ENCODE measurements at regions of chr16 and their contacts with region 1.

Region 1: GRCh38 chr16:84726079-84726668 is 26.4 kb downstream of the USP10 start:
- DNase-seq: peak; percentile 66
- H3K4me3 ChIP-seq: peak overlapping the region; percentile 0; the same call in 1 of the 2 replicates
- H3K27ac ChIP-seq: peak overlapping the region; percentile 62
- H3K27me3 ChIP-seq: no peaks in the 10 kb centered on the region
- CTCF ChIP-seq: peak; percentile 93

Region 2: DNA sequence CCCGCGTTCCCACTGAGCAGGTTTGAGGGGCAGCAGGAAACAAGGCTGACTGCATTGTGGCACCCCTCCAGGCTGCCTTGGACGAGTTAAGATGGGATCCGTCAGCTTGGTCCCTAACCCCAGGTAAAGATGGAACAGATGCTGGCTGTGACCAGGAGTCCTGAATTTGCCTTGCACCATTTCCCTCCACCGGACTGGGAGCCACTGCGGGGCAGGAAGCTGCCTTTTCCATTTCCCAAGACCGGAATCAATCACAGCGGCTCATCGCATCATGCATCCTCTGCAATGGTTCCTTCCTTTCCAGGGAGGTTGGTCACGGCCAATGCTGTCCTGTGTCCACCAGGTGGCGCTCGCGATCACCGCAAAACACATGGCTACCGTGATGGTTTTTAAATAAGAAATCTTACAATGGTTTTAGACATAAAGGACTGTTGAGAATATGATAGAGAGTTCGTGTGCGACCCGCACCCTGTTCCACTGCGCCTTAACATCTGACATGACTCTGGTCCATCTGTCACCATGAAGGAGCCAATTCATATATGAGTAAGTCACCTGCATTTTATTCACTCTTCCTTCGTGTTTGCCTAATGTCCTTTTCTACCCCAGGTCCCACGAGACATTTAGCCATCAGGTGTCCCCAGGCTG is 214.9 kb before region 1 on chr16:
- CTCF ChIA-PET with region 1: interaction called, 44 read pairs
- POLR2A ChIA-PET with region 1: no interaction called
- DNase-seq: peak; percentile 77
- H3K4me3 ChIP-seq: 0 out of 2 replicates have a peak overlapping the region, but pooled peaks have one; percentile 29
- H3K27ac ChIP-seq: no peak overlapping the region
- H3K27me3 ChIP-seq: no peaks in the 10 kb centered on the region
- CTCF ChIP-seq: peak; percentile 89

Region 3: DNA sequence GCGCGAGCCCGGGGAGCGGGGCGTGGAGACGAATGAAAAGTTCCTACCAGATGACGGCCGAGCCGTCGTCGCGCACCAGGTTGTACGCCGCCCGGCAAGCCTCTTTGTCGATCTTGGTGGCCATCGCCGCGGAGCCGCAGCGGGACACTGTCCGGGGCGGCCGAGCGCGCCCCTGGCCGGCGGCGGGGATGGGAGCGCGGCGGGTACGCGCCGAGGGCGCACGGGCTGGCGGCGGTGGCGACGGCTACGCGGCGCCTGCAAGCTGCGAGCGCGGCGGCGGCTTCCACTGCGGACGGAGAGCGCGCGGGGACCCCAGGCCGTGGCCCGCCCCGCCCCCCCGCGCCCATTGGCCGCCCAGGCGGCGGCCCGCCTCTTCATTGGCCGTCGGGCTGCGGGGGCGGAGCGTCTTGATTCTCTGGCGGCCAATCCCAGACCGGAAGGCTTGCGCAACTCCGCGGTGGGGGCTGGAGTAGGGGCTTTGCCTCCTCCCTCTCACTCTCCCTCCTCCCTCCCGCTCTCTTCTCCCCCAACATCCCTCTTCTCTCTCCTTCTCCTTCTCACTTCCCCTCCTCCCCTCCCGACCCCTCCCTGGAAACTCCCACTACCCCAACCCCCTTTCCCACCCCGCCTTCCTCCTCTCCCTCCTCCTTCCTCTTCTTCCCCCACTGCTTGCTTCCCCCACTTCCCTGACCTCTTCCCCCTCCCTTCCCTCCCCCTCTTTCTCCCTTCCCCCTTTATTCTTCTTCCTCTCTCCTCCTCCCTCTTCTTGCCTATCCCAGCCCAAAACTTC is 108.2 kb before region 1 on chr16 and contains the start of gene COTL1:
- CTCF ChIA-PET with region 1: interaction called, 62 read pairs
- POLR2A ChIA-PET with region 1: no interaction called
- DNase-seq: peak; percentile 97
- H3K4me3 ChIP-seq: peak within 1 kb of the TSS; percentile 87
- H3K27ac ChIP-seq: peak within 1 kb of the TSS; percentile 96
- H3K27me3 ChIP-seq: no peaks in the 10 kb centered on the region
- CTCF ChIP-seq: no peak
- polyA plus RNA-seq, gene COTL1: 153 and 197 TPM in 2 replicates

Region 4: GRCh38 chr16:84672276-84673202 is 53.6 kb before region 1 on chr16:
- CTCF ChIA-PET with region 1: interaction called, 72 read pairs
- POLR2A ChIA-PET with region 1: interaction called, 3 read pairs
- DNase-seq: peak; percentile 29
- H3K4me3 ChIP-seq: no peak overlapping the region
- H3K27ac ChIP-seq: no peak overlapping the region
- H3K27me3 ChIP-seq: no peaks in the 10 kb centered on the region
- CTCF ChIP-seq: peak; percentile 89

Region 5: DNA sequence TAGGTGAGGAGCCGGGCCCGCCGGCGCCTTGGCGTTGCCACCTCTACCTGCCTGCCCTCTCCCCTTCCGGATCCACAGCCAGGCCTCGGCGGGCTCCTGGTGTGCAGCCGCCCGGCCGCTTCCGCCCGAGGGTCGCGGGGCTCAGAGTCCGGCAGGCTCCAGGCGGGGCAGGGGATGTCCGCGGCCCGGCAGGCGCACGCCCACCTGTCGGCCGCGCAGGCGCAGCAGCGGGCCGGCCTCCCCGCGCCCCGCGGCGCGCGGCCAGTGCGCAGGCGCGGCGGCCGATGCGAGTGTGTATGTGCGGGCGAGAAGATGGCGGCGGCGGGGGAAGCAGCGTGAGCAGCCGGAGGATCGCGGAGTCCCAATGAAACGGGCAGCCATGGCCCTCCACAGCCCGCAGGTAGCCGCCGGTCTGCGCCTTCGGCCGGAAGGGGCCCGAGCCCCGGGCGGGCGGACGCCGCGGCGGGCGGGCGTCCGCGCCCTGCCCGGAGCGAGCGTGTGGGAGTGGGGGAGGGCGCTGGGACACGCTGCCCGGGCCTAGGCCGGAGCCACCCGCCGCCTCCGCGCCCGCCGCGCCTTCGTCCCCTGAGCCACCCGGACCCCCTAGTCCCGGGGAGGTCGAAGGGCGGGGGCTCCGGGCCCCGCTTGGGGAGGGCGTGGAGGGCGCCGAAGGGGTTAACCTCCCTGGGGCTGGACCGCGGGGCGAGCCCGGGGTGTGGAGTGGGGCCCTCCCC is 26.3 kb before region 1 on chr16 and contains the start of gene USP10:
- CTCF ChIA-PET with region 1: interaction called, 23 read pairs
- POLR2A ChIA-PET with region 1: interaction called, 3 read pairs
- DNase-seq: no peak
- H3K4me3 ChIP-seq: peak within 1 kb of the TSS; percentile 84
- H3K27ac ChIP-seq: no peak within 1 kb of the TSS
- H3K27me3 ChIP-seq: no peaks in the 10 kb centered on the region
- CTCF ChIP-seq: no peak
- polyA plus RNA-seq, gene USP10: 54.9 and 79.3 TPM in 2 replicates

Region 6: GRCh38 chr16:84738255-84739038 is 12.3 kb after region 1 on chr16:
- CTCF ChIA-PET with region 1: interaction called, 31 read pairs
- POLR2A ChIA-PET with region 1: interaction called, 3 read pairs
- DNase-seq: peak; percentile 26
- H3K4me3 ChIP-seq: no peak overlapping the region
- H3K27ac ChIP-seq: no peak overlapping the region
- H3K27me3 ChIP-seq: no peaks in the 10 kb centered on the region
- CTCF ChIP-seq: peak; percentile 84

Region 7: GRCh38 chr16:84774810-84775209 is 48.6 kb after region 1 on chr16:
- CTCF ChIA-PET with region 1: no interaction called
- POLR2A ChIA-PET with region 1: no interaction called
- DNase-seq: peak; percentile 73
- H3K4me3 ChIP-seq: no peak overlapping the region
- H3K27ac ChIP-seq: peak overlapping the region; percentile 52
- H3K27me3 ChIP-seq: no peaks in the 10 kb centered on the region
- CTCF ChIP-seq: no peak

Region 8: DNA sequence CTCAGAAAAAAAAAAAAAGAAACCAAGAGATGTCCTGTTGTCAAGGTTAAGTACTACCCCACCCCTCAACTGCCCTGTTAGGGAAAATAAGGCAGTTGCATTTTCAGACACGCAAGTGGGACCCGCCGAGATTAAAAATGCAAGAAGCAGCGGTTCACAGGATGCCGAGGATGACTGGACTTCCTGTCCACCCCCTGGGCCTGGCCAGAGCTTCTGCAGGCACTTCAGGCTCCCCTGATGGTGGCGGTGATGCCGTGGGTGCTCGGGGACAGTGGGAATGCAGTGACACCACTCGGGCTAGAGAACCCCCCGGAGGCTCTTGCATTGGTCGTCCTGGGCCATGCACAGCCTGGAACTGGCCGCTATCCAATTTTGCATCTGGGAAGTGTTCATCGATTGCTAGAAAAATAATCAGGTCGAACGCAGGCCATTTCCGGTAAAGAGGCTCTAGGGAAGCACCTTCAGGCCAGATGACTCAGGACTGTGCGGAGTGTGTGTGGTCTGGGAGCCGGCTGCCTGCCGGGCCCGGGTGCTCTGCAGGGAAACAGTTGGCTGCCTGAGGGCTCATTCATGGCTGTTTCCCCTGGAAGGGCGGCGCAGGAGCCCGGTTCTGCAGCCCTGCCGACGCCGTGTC is 80.2 kb after region 1 on chr16:
- CTCF ChIA-PET with region 1: no interaction called
- POLR2A ChIA-PET with region 1: no interaction called
- DNase-seq: peak; percentile 71
- H3K4me3 ChIP-seq: no peak overlapping the region
- H3K27ac ChIP-seq: peak overlapping the region; percentile 78
- H3K27me3 ChIP-seq: no peaks in the 10 kb centered on the region
- CTCF ChIP-seq: no peak

Measured in AG04450 (cell line).